Naive thymus-derived CD4-positive, alpha-beta T cell (primary cell): ENCODE measurements at regions of chr5 and their contacts with region 1.

Region 1: GRCh38 chr5:62331921-62332320 is 25.9 kb downstream of the KIF2A start:
- DNase-seq: no peak
- ATAC-seq: no peak
- H3K4me3 ChIP-seq: no peak overlapping the region
- H3K4me3 Mint-ChIP-seq: no peak overlapping the region
- H3K27ac ChIP-seq: no peak overlapping the region
- H3K27ac Mint-ChIP-seq: peak overlapping the region in 5 of 9 donors; percentile 8 to 63 (median 13)
- H3K4me1 ChIP-seq: peaks cover 9 to 33% of the 10 kb centered on the region in 2 donors
- H3K4me1 Mint-ChIP-seq: peaks cover 46 to 91% (median 84%) of the 10 kb centered on the region in 7 donors
- H3K27me3 ChIP-seq: no peaks in the 10 kb centered on the region
- H3K27me3 Mint-ChIP-seq: no peaks in the 10 kb centered on the region

Region 2: DNA sequence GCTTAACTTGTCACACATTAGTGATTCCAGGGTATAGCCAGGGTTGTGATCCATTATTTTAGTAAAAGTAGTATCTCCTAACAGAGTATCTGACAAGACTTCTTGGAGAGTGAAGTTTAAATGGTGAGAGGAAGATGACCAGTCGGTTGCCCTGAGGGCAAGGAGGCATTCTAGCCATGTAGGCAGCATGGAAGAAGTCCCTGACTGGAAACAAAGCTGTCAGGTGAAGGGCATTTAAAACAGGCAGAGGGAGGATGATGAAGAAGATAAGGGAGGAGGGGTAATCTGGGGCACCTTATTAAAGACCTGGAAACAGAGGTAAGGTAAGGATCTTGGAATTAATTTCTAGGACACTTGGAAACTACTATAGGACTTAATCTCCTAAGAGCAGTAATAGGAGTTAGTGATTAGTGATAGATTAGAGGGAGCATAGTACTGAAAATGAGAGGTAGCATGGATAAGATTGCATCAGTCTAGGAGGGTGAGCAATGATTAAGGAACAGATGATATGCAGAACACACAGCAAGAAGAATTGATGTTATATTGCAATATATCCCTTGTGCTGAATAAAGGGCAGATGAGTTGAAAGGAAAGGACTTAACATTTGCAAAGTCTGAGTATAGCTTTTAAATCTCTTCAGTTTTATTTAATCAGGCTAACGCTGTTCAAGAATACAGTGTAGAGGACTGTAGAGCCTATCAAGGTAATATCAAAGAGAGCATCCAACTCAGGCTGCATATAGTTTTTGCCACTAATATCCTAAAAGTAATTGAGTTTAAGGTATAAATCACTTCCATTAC is 16.3 kb before region 1 on chr5:
- CTCF ChIA-PET with region 1: interaction called, 3 read pairs
- POLR2A ChIA-PET with region 1: interaction called, 9 read pairs
- intact Hi-C with region 1: loop called in 1 of 2 experiments (anchors 2 kb)
- DNase-seq: no peak
- ATAC-seq: no peak
- H3K4me3 ChIP-seq: no peak overlapping the region
- H3K4me3 Mint-ChIP-seq: peak overlapping the region in 8 of 10 donors; percentile 0 to 60 (median 18)
- H3K27ac ChIP-seq: no peak overlapping the region
- H3K27ac Mint-ChIP-seq: peak overlapping the region in 7 of 9 donors; percentile 9 to 87 (median 23)
- H3K4me1 ChIP-seq: peaks cover 61 to 69% of the 10 kb centered on the region in 2 donors
- H3K4me1 Mint-ChIP-seq: peaks cover 67 to 94% (median 87%) of the 10 kb centered on the region in 7 donors
- H3K27me3 ChIP-seq: no peaks in the 10 kb centered on the region
- H3K27me3 Mint-ChIP-seq: no peaks in the 10 kb centered on the region